ENCODE measurements at regions of chr20 and their contacts with region 1.

Region 1: GRCh38 chr20:32772046-32772445 is 9.9 kb downstream of the DNMT3B start:
- DNase-seq: no peak
- ATAC-seq: no peak
- H3K4me3 Mint-ChIP-seq: no peak overlapping the region
- H3K27ac Mint-ChIP-seq: no peak overlapping the region
- H3K4me1 Mint-ChIP-seq: peaks cover 24% of the 10 kb centered on the region
- H3K27me3 Mint-ChIP-seq: no peaks in the 10 kb centered on the region

Region 2: GRCh38 chr20:32737371-32738223 is 34.4 kb before region 1 on chr20:
- CTCF ChIA-PET with region 1: interaction called, 7 read pairs
- POLR2A ChIA-PET with region 1: interaction called, 3 read pairs
- intact Hi-C with region 1: loop called in 1 of 2 experiments (anchors 5 kb)
- DNase-seq: peak; percentile 59
- ATAC-seq: peak; percentile 90
- H3K4me3 Mint-ChIP-seq: no peak overlapping the region
- H3K27ac Mint-ChIP-seq: peak overlapping the region; percentile 76
- H3K4me1 Mint-ChIP-seq: peaks cover 39% of the 10 kb centered on the region
- H3K27me3 Mint-ChIP-seq: no peaks in the 10 kb centered on the region

Region 3: GRCh38 chr20:32752458-32753250 is 19.4 kb before region 1 on chr20:
- CTCF ChIA-PET with region 1: no interaction called
- POLR2A ChIA-PET with region 1: interaction called, 10 read pairs
- intact Hi-C with region 1: no loop called
- DNase-seq: peak; percentile 27
- ATAC-seq: peak; percentile 76
- H3K4me3 Mint-ChIP-seq: no peak overlapping the region
- H3K27ac Mint-ChIP-seq: no peak overlapping the region
- H3K4me1 Mint-ChIP-seq: peaks cover 7% of the 10 kb centered on the region
- H3K27me3 Mint-ChIP-seq: no peaks in the 10 kb centered on the region